WTC11 (cell line): ENCODE measurements at regions of chr4 and their contacts with region 1.

Region 1: DNA sequence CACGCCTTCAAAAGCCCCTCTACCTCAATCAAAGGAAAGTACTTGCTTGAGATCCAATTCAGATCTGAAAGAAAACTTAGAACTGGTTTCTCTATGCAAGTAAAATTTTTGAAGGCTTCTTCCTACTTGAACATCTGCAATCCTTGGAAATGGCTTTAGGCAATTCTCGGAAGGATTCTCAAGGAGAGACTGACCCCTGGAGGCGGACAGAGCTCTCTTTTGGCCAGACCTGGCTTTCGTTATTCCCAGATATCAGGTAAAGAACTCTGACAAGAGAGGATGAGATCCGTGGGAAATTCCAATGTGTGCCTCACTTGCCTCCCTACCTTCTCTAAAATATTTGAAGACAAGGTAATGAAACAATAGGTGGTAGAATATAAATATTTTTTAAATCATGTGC is 670.3 kb upstream of the FAM241A start:
- DNase-seq: peak; percentile 67
- ATAC-seq: peak; percentile 87
- H3K4me3 Mint-ChIP-seq: no peak overlapping the region
- H3K27ac Mint-ChIP-seq: no peak overlapping the region
- H3K4me1 Mint-ChIP-seq: no peaks in the 10 kb centered on the region
- H3K27me3 Mint-ChIP-seq: no peaks in the 10 kb centered on the region
- CTCF ChIP-seq: peak; percentile 28; the same call in 1 of the 2 replicates

Region 2: GRCh38 chr4:111136438-111136837 is 338.6 kb before region 1 on chr4:
- CTCF ChIA-PET with region 1: interaction called, 10 read pairs
- POLR2A ChIA-PET with region 1: no interaction called
- DNase-seq: no peak
- ATAC-seq: peak; percentile 62
- H3K4me3 Mint-ChIP-seq: no peak overlapping the region
- H3K27ac Mint-ChIP-seq: no peak overlapping the region
- H3K4me1 Mint-ChIP-seq: no peaks in the 10 kb centered on the region
- H3K27me3 Mint-ChIP-seq: no peaks in the 10 kb centered on the region
- CTCF ChIP-seq: no peak

Region 3: GRCh38 chr4:111449657-111450056 is 25.3 kb before region 1 on chr4:
- CTCF ChIA-PET with region 1: no interaction called
- POLR2A ChIA-PET with region 1: no interaction called
- DNase-seq: no peak
- ATAC-seq: no peak
- H3K4me3 Mint-ChIP-seq: no peak overlapping the region
- H3K27ac Mint-ChIP-seq: no peak overlapping the region
- H3K4me1 Mint-ChIP-seq: peaks cover 2% of the 10 kb centered on the region; the same call in 1 of the 2 replicates
- H3K27me3 Mint-ChIP-seq: no peaks in the 10 kb centered on the region; the same call in 1 of the 2 replicates
- CTCF ChIP-seq: no peak

Region 4: GRCh38 chr4:111649308-111649707 is 174.3 kb after region 1 on chr4:
- CTCF ChIA-PET with region 1: no interaction called
- POLR2A ChIA-PET with region 1: no interaction called
- DNase-seq: no peak
- ATAC-seq: peak; percentile 52; the same call in 1 of the 2 replicates
- H3K4me3 Mint-ChIP-seq: no peak overlapping the region
- H3K27ac Mint-ChIP-seq: no peak overlapping the region; the same call in 1 of the 2 replicates
- H3K4me1 Mint-ChIP-seq: peaks cover 46% of the 10 kb centered on the region
- H3K27me3 Mint-ChIP-seq: no peaks in the 10 kb centered on the region
- CTCF ChIP-seq: no peak